Activated CD4-positive, alpha-beta T cell treated with anti-CD3 and anti-CD28 coated beads for 36 hours (primary cell): ENCODE measurements at regions of chr2 and their contacts with region 1.

Region 1: GRCh38 chr2:62195421-62196277 is at the start of gene B3GNT2:
- DNase-seq: peak; percentile 92
- ATAC-seq: peak; percentile 62
- H3K4me3 Mint-ChIP-seq: peak within 1 kb of the TSS; percentile 92
- H3K27ac Mint-ChIP-seq: peak within 1 kb of the TSS; percentile 92
- H3K4me1 Mint-ChIP-seq: peaks cover 28% of the 10 kb centered on the region
- H3K27me3 Mint-ChIP-seq: no peaks in the 10 kb centered on the region
- total RNA-seq, gene B3GNT2: 28.6 to 31.7 TPM

Region 2: DNA sequence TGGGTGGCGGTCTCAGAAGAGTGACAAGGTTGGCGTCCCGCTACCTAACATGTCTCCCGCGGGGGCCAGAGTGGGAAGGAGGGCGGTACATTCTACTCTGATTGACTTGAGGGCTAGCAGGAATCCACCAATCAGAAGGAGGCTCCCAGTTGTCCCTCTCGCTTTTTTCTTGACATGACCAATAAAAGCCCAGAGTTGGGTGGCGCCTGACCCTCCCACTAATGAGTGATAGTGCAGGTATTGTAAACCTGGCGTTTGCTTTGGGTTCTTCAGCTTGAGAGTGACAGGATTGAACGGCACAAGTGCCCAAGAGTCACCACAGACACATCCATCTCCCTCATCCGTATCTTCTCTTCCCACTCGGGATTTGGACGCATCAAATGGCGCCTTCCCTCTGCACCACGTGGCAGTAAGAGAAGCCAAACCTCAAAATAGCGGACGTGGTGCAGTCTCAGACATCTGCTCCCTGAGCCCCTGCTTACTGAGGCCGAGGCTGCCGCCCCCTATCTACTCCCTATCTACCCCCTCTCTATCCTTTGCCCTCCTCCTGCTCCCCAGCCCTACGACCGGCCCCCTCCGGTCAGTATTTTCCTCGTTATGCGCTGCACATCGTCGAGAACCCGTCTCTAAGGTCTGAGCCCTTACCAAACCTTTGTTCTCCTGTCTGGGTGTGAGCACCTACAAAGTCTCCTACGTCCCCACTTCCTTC is 341.0 kb before region 1 on chr2:
- CTCF ChIA-PET with region 1: no interaction called
- POLR2A ChIA-PET with region 1: no interaction called
- intact Hi-C with region 1: loop called in 1 of 2 experiments (anchors 1 kb)
- DNase-seq: peak; percentile 93
- ATAC-seq: peak; percentile 94
- H3K4me3 Mint-ChIP-seq: peak overlapping the region; percentile 99
- H3K27ac Mint-ChIP-seq: peak overlapping the region; percentile 94
- H3K4me1 Mint-ChIP-seq: peaks cover 20% of the 10 kb centered on the region
- H3K27me3 Mint-ChIP-seq: no peaks in the 10 kb centered on the region

Region 3: DNA sequence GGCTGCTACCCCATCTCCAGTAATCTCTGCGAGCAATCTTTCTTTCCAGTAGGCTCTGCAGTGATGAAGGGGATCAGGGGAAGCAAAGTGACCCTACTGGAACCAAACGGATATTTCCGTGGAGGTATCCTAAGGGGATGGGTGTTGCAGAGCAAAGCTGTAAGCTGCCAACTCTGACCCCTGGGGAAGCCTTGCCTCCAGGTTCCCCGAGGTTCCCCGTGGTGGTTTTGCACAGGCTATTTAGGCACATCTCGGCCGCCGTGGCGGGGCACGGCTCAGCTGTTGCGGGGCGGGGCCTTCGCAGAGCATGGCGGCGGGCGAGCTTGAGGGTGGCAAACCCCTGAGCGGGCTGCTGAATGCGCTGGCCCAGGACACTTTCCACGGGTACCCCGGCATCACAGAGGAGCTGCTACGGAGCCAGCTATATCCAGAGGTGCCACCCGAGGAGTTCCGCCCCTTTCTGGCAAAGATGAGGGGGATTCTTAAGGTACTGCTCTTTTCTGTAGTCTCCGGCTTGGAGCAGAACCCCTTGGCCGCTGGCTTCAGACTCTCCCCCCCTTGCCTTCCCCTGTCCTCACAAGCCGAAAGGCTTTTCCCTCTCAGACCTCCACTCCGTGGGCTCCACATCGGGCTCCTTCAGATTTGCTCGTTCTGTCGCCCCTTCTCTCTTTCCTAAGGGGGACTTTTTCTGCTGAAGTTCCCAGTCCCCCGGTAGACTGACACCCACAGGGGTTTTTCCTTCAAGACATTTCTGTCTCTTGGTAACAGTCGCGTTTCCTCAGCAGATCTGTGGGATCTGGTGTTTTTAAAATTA is 290.1 kb before region 1 on chr2 and contains the start of gene COMMD1:
- CTCF ChIA-PET with region 1: no interaction called
- POLR2A ChIA-PET with region 1: no interaction called
- intact Hi-C with region 1: loop called (anchors 1 to 10 kb)
- DNase-seq: peak; percentile 93
- ATAC-seq: peak; percentile 99
- H3K4me3 Mint-ChIP-seq: peak within 1 kb of the TSS; percentile 96
- H3K27ac Mint-ChIP-seq: peak within 1 kb of the TSS; percentile 80
- H3K4me1 Mint-ChIP-seq: peaks cover 9% of the 10 kb centered on the region
- H3K27me3 Mint-ChIP-seq: no peaks in the 10 kb centered on the region
- total RNA-seq, gene COMMD1: 29.3 to 36.1 TPM

Region 4: GRCh38 chr2:62306751-62307468 is 111.3 kb after region 1 on chr2:
- CTCF ChIA-PET with region 1: no interaction called
- POLR2A ChIA-PET with region 1: interaction called, 9 read pairs
- intact Hi-C with region 1: loop called (anchors 1 kb)
- DNase-seq: peak; percentile 69
- ATAC-seq: peak; percentile 20
- H3K4me3 Mint-ChIP-seq: no peak overlapping the region
- H3K27ac Mint-ChIP-seq: peak overlapping the region; percentile 79
- H3K4me1 Mint-ChIP-seq: peaks cover 72% of the 10 kb centered on the region
- H3K27me3 Mint-ChIP-seq: no peaks in the 10 kb centered on the region

Region 5: GRCh38 chr2:62705007-62705829 is 509.6 kb after region 1 on chr2 and contains the start of gene EHBP1:
- CTCF ChIA-PET with region 1: no interaction called
- POLR2A ChIA-PET with region 1: no interaction called
- intact Hi-C with region 1: loop called (anchors 1 to 10 kb)
- DNase-seq: peak; percentile 99
- ATAC-seq: peak; percentile 95
- H3K4me3 Mint-ChIP-seq: peak within 1 kb of the TSS; percentile 79
- H3K27ac Mint-ChIP-seq: peak within 1 kb of the TSS; percentile 83
- H3K4me1 Mint-ChIP-seq: peaks cover 31% of the 10 kb centered on the region
- H3K27me3 Mint-ChIP-seq: no peaks in the 10 kb centered on the region
- total RNA-seq, gene EHBP1: 27.3 to 28.5 TPM